ENCODE measurements at regions of chr10 and their contacts with region 1.

Region 1: GRCh38 chr10:93482145-93482834 is at the start of gene MYOF:
- DNase-seq: peak; percentile 63 to 73 (median 70)
- H3K4me3 ChIP-seq: peak within 1 kb of the TSS; percentile 44
- H3K27ac ChIP-seq: peak within 1 kb of the TSS; percentile 79 to 87
- H3K4me1 ChIP-seq: peaks cover 5% of the 10 kb centered on the region
- H3K27me3 ChIP-seq: no peaks in the 10 kb centered on the region
- CTCF ChIP-seq: peak; percentile 43 to 80 (median 76)
- EP300 ChIP-seq: no peak
- POLR2A ChIP-seq: peak; percentile 48
- total RNA-seq, gene MYOF: 14.9 to 78.4 (median 45.7) TPM

Region 2: GRCh38 chr10:93368210-93368609 is 114.1 kb before region 1 on chr10:
- intact Hi-C with region 1: loop called in 1 of 4 experiments (anchors 5 kb)
- DNase-seq: no peak
- H3K4me3 ChIP-seq: no peak overlapping the region
- H3K27ac ChIP-seq: no peak overlapping the region
- H3K4me1 ChIP-seq: no peaks in the 10 kb centered on the region
- H3K27me3 ChIP-seq: no peaks in the 10 kb centered on the region
- CTCF ChIP-seq: no peak
- EP300 ChIP-seq: no peak
- POLR2A ChIP-seq: no peak

Region 3: DNA sequence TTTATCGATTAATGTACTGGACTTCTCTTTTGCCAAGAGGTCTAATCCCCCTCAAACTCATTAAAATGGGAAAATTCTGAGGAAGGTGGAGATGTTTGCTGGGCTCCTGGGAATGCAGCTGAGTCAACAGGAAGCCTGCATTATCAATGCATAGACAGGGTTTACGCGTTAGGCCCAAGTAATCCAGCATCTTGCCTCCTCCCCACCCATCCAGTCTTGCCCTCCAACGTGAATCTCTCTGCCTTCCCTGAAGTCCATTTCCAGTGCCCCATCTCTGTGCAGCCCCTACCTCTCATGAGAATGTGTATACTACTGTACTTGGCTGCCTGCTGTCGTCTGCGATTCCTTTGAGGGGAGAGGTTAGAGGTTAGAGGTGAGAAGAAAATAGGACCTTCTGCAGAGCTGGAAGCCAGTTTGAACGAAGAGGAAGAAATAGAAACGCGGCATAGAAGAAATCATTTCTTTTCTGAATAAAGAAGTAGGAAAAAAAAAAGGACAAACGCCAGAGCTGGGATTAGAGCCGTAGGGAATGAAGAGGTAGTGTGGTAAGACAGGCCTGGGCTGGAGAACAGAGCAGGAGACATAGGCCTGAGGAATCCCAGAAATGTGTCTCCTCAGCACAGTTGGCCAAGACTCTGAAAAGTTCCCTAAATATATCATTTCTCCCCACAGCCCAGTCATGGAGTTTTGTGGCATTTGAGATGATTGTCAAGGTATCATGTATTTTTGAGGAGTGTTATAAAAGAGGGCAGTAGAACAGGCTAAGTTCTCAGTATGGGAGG is 75.7 kb before region 1 on chr10:
- intact Hi-C with region 1: no loop called
- DNase-seq: no peak
- H3K4me3 ChIP-seq: no peak overlapping the region
- H3K27ac ChIP-seq: no peak overlapping the region
- H3K4me1 ChIP-seq: no peaks in the 10 kb centered on the region
- H3K27me3 ChIP-seq: no peaks in the 10 kb centered on the region
- CTCF ChIP-seq: no peak
- EP300 ChIP-seq: no peak
- POLR2A ChIP-seq: no peak

Region 4: DNA sequence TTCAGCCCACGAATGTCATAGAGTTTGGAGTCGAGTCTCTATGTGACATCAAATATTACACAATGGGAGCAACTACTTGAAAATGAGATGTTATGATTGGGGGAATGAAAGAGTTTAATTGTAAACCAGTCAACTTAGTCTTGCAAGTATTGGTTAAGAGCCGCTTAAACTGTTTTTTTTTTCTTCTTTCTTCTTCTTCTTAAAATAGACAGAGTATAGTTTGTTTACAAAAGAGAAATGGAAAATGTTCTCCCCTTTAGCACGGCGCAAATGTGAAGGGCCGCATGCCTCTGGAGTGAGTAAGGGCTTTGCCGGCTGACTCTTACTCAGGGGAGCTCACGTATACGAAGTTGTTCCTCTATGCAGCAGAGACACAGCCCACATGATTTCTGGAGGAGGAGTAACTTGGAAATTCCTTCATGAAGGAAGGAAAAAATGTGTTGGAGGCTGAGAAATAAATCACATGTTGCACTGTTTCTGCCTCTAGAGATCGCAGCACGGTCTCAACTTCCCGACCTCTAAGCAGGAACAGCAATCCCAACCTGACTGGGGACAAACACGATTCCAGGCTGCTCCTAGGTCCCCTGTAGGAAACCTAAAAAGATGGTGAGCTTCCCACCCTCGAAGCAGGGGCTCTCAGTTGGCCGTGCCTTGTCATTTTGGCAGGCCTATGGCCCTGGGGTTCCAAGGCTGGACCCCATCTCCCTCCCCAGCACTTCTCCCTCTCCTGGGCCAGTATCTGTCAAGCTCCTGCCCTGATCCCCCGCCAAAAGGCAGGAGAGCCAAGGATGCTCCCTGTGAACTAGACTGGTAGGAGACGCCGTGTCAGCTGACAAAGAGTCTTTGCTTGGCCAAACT is 45.0 kb before region 1 on chr10:
- intact Hi-C with region 1: loop called in 2 of 4 experiments (anchors 5 to 10 kb)
- DNase-seq: peak; percentile 73 to 90 (median 82)
- H3K4me3 ChIP-seq: peak overlapping the region; percentile 17
- H3K27ac ChIP-seq: peak overlapping the region; percentile 98 to 100
- H3K4me1 ChIP-seq: peaks cover 20% of the 10 kb centered on the region
- H3K27me3 ChIP-seq: no peaks in the 10 kb centered on the region
- CTCF ChIP-seq: peak in 2 of 3 donors; percentile 11 to 18
- EP300 ChIP-seq: peak; percentile 81
- POLR2A ChIP-seq: peak; percentile 49

Region 5: DNA sequence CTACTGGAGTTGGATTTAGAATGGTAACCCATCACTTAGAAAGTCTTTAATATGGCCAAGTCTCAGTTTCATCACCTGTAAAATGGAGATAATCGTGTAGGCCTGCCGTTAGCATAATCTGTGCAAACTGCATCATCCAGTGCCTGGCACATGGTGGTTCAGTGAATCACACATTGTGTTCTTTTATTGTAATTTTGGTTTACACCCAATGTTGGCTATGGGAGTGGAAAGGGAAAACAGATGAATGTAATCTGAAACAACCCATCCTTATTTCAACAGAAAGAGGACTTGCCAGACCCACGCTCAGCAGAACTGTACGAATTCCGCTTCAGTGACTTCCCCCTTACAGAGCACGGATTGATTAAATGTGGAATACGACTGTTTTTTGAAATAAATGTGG is 157.5 kb after region 1 on chr10:
- intact Hi-C with region 1: no loop called
- DNase-seq: no peak
- H3K4me3 ChIP-seq: no peak overlapping the region
- H3K27ac ChIP-seq: no peak overlapping the region
- H3K4me1 ChIP-seq: no peaks in the 10 kb centered on the region
- H3K27me3 ChIP-seq: no peaks in the 10 kb centered on the region
- CTCF ChIP-seq: no peak
- EP300 ChIP-seq: no peak
- POLR2A ChIP-seq: no peak